ENCODE measurements at regions of chr16 and their contacts with region 1.

Region 1: DNA sequence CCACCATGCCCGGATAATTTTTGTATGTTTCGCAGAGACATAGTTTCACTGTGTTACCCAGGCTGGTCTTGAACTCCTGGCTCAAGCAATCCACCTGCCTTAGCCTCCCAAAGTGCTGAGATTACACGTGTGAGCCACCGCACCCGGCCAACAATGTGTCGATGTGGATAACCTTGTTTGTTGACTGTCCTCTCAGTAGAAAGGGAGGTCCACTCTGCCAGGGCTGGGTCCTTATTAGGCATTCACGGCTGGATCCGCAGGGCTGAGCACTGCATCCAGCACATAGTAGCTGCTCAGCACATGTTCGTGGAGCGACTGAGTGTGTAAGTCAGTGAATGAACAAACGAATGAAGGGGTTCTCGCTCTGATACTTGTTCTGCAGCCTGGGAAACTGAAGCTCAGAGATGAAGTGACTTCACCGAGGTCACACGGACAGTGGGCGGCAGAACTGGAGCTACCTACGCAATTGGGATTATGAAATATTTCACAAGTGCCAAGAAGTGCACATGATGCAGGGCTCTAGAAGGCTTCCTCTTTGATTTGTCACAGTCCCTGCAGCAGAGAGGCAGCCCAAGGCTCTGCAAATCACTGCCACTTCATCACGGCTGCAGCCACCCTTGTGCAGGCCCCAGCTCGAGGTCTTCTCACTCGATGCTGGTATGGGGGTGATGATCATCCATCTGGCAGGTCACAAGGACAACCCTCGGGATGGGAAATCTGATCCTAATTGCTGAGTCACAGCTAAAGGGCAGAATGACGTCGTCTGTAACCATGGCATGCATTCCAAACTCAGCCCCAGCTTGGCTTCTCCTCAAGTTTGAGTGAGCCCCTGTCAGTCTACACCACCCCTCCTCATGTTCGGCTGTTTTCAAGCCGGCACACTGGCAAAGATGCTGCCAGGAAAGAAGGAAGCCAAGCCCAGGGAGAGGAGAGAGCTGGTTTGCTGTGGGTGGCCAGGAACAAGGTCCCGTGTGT is 28.0 kb upstream of the SNN start:
- DNase-seq: peak; percentile 95
- H3K4me3 ChIP-seq: no peak overlapping the region
- H3K27ac ChIP-seq: peak overlapping the region; percentile 88
- H3K4me1 ChIP-seq: peaks cover 18% of the 10 kb centered on the region
- H3K27me3 ChIP-seq: no peaks in the 10 kb centered on the region
- CTCF ChIP-seq: no peak

Region 2: GRCh38 chr16:11535471-11535870 is 104.7 kb before region 1 on chr16:
- CTCF ChIA-PET with region 1: no interaction called
- dilution Hi-C with region 1: loop called (anchors 5 kb)
- in situ Hi-C with region 1: loop called in 1 of 2 experiments (anchors 5 kb)
- intact Hi-C with region 1: loop called (anchors 1 kb)
- DNase-seq: peak; percentile 82
- H3K4me3 ChIP-seq: no peak overlapping the region
- H3K27ac ChIP-seq: no peak overlapping the region
- H3K4me1 ChIP-seq: peaks cover 12% of the 10 kb centered on the region
- H3K27me3 ChIP-seq: no peaks in the 10 kb centered on the region
- CTCF ChIP-seq: no peak

Region 3: GRCh38 chr16:11586856-11587642 is 53.2 kb before region 1 on chr16 and contains the start of gene LITAF:
- CTCF ChIA-PET with region 1: interaction called, 3 read pairs
- dilution Hi-C with region 1: no loop called
- in situ Hi-C with region 1: loop called in 1 of 2 experiments (anchors 10 kb)
- intact Hi-C with region 1: loop called (anchors 1 kb)
- DNase-seq: peak; percentile 74
- H3K4me3 ChIP-seq: peak within 1 kb of the TSS; percentile 72 to 88 (median 84)
- H3K27ac ChIP-seq: peak within 1 kb of the TSS; percentile 83
- H3K4me1 ChIP-seq: peaks cover 30% of the 10 kb centered on the region
- H3K27me3 ChIP-seq: no peaks in the 10 kb centered on the region
- CTCF ChIP-seq: peak in 1 of 2 donors; percentile 27
- total RNA-seq, gene LITAF: 128 to 197 TPM

Region 4: DNA sequence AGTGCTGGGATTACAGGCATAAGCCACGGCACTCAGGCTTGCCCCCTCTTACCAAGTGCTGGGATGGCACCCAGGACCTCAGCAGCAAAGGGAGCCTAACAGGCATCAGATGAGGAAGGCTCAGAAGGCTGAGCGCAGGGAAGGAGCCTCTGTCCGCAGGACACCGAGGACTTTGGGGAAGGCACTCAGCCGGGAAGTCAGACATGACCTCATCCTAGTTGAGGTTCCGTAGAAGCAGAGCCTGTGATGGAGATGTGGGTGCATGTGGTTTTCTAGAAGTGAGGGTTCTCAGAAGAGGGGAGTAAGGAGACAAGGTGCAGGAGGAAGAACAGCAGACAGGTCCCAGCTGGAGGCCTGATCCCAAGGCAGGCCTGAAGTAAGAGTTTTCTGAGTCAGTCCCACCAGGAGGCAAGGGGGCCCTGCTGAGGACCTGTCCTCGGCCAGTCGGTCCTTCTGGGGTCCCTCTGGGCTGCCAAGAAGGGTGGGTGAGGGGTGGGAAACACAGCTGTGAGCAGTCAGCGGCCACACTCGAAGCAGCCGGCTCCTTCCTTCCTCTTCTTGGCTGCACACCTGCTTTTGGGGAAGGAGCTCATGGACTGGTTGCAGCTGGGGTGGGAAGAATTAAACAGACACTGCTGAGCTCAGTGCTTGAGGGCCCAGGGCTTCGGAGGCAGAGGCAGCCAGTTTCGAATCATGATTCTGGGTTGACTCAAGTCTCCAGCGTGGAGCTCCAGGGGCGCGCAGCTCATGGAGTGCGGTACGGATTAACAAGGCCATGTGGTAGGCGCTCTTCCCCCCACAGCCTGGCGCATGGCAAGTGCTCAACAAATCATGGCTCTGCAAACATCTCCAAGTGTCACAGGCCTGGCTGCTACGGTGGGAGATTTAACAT is 10.9 kb before region 1 on chr16:
- CTCF ChIA-PET with region 1: no interaction called
- dilution Hi-C with region 1: no loop called
- in situ Hi-C with region 1: no loop called
- intact Hi-C with region 1: loop called (anchors 1 kb)
- DNase-seq: no peak
- H3K4me3 ChIP-seq: no peak overlapping the region
- H3K27ac ChIP-seq: peak overlapping the region; percentile 88
- H3K4me1 ChIP-seq: peaks cover 44% of the 10 kb centered on the region
- H3K27me3 ChIP-seq: no peaks in the 10 kb centered on the region
- CTCF ChIP-seq: no peak

Region 5: GRCh38 chr16:11682655-11683096 is 42.5 kb after region 1 on chr16:
- CTCF ChIA-PET with region 1: no interaction called
- dilution Hi-C with region 1: loop called (anchors 5 kb)
- in situ Hi-C with region 1: no loop called
- intact Hi-C with region 1: loop called (anchors 2 kb)
- DNase-seq: peak; percentile 88
- H3K4me3 ChIP-seq: no peak overlapping the region
- H3K27ac ChIP-seq: peak overlapping the region; percentile 62
- H3K4me1 ChIP-seq: peaks cover 36% of the 10 kb centered on the region
- H3K27me3 ChIP-seq: no peaks in the 10 kb centered on the region
- CTCF ChIP-seq: no peak

Region 6: DNA sequence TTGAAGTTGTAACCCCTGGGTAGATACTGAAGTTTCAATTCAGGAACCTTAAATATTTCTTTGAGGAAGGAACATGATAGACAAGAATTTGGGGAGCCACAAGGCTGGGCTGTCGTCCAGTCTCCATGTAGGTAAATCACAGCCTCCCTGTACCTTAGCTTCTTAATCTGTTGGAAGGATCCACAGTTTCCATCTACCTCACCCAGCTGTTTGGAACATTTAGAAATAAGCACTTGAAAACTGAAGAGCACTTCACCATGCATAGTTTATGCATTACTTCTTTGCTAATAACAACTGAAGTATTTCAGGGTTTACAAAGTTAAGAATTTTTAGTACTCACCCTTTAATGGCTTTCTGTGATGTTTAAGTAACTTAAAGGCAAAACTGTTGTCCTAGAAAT is 85.2 kb after region 1 on chr16:
- CTCF ChIA-PET with region 1: no interaction called
- dilution Hi-C with region 1: no loop called
- in situ Hi-C with region 1: no loop called
- intact Hi-C with region 1: no loop called
- DNase-seq: no peak
- H3K4me3 ChIP-seq: no peak overlapping the region
- H3K27ac ChIP-seq: no peak overlapping the region
- H3K4me1 ChIP-seq: no peaks in the 10 kb centered on the region
- H3K27me3 ChIP-seq: no peaks in the 10 kb centered on the region
- CTCF ChIP-seq: no peak